GM13977 (cell line): ENCODE measurements at regions of chr15 and their contacts with region 1.

Region 1: GRCh38 chr15:39580117-39580484 is 778 bp upstream of the THBS1 start:
- DNase-seq: peak; percentile 88
- CTCF ChIP-seq: peak; percentile 97

Region 2: GRCh38 chr15:39118510-39118909 is 461.6 kb before region 1 on chr15:
- in situ Hi-C with region 1: loop called (anchors 25 kb)
- DNase-seq: no peak
- CTCF ChIP-seq: no peak

Region 3: GRCh38 chr15:39358441-39359041 is 221.6 kb before region 1 on chr15:
- in situ Hi-C with region 1: loop called (anchors 25 kb)
- DNase-seq: no peak
- CTCF ChIP-seq: no peak